Sigmoid colon (tissue), 7 donors: ENCODE measurements at regions of chr18 and their contacts with region 1.

Region 1: DNA sequence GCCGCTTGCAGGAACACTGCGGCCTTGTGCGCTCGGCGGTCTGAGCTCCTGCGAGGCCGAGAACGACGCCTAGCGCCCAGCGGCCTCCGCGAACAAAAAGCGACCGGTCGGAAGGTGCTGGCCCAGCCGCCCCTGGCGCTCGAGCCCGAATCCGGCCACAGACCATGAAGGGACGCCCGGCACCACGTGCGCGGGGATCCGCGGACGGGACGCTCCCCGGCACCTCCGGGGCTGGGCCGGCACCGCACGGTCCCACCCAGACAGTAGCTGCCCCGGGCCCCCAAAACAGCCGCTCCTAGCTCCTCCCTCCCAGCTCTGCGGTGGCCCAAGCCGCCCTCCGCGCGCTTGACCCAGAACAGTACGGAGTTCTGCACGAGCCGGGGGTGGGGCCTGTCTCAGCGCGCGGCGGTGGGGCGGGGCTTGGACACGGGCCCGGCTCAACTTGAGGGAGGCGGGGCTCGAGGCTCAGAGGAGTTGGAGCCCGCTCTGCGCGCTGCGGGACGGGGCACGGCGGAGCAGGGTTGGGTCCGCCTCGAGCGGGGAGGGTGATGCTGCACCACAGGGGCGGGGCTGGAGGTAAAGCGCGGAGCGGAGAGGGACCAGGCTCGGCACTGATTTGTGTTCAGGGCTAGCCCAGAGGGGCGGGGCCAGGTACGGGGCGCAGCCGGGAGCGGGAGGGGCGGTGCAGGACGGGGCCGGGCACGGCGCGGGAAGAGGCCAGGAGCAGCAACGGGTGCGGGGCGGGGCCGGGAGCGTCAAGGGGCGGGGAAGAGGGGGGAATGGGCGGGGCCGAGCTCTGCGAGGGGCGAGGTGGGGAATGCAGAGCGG is 538 bp upstream of the IMPA2 start:
- DNase-seq: peak; percentile 100
- H3K4me3 ChIP-seq: peak overlapping the region; percentile 72 to 82 (median 80)
- H3K27ac ChIP-seq: peak overlapping the region; percentile 89 to 99 (median 96)
- H3K4me1 ChIP-seq: peaks cover 0 to 36% (median 19%) of the 10 kb centered on the region in 4 donors
- H3K27me3 ChIP-seq: no peaks in the 10 kb centered on the region
- CTCF ChIP-seq: peak in 1 of 4 experiments; percentile 7
- EP300 ChIP-seq: peak in 2 of 4 donors; percentile 2 to 43
- POLR2A ChIP-seq: peak; percentile 75 to 85

Region 2: DNA sequence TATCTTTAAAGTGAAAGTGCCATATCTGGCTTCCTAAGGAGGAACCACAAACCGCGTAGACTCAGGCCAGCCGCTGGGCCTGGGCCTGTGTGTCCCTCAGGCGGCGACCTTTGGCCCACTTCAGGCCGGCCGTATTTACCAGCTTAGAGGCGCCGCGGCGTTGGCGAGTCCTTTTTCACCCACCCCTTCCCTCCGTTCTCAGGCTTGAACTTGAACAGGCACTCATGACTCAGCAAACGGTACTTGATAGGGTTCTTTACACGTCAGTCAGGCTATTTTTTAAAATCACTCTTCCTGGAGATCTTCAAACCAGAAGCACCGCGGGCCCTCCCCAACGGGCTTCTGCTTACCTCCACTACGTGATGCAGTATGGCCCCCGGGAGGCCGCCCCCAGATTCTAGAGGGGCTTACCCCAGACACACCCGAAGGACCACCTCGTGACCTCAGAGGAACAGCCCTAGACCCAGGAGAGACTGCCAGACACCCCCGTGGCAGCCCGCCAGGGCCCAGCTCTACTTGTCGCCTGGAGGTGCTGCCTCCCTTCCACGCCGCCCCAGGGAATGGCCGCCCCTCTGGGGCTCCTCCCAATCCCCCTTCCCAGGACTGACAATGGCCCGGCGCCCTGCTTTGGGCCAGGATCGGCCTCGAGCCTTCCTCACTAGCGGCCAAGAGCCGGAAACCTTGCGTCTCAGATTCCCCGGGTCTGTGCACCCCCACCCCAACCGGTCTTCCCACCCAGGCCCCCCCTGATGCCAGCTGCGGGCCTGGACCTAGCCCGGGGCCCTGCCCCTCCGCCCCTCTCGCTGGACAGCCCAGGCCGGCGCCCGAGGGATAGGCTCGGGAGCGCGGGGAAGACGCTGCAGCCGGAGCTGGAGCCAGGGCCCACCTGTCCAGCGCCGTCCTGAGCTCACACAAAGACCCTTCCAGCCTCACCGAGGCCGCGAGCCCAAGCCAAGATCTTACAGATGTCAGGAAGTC is 33.3 kb before region 1 on chr18:
- intact Hi-C with region 1: loop called (anchors 2 kb)
- DNase-seq: peak; percentile 98
- H3K4me3 ChIP-seq: peak overlapping the region; percentile 42 to 60 (median 50)
- H3K27ac ChIP-seq: peak overlapping the region; percentile 88 to 99 (median 95)
- H3K4me1 ChIP-seq: peaks cover 0 to 34% (median 27%) of the 10 kb centered on the region in 4 donors
- H3K27me3 ChIP-seq: no peaks in the 10 kb centered on the region
- CTCF ChIP-seq: no peak
- EP300 ChIP-seq: peak in 2 of 4 donors; percentile 65 to 77
- POLR2A ChIP-seq: peak; percentile 19 to 45

Region 3: GRCh38 chr18:11955239-11956029 is 25.3 kb before region 1 on chr18:
- intact Hi-C with region 1: loop called (anchors 1 kb)
- DNase-seq: peak; percentile 89
- H3K4me3 ChIP-seq: no peak overlapping the region
- H3K27ac ChIP-seq: peak overlapping the region; percentile 70 to 88 (median 78)
- H3K4me1 ChIP-seq: peaks cover 0 to 24% (median 14%) of the 10 kb centered on the region in 4 donors
- H3K27me3 ChIP-seq: no peaks in the 10 kb centered on the region
- CTCF ChIP-seq: no peak
- EP300 ChIP-seq: no peak
- POLR2A ChIP-seq: no peak